HAP-1 (cell line): ENCODE measurements at regions of chr13 and their contacts with region 1.

Region 1: GRCh38 chr13:61954092-61954491 is 538.4 kb upstream of the PCDH20 start:
- DNase-seq: peak in 1 of 2 experiments; percentile 62
- H3K4me3 ChIP-seq: no peak overlapping the region
- H3K4me1 ChIP-seq: no peaks in the 10 kb centered on the region
- H3K27me3 ChIP-seq: peaks cover 3% of the 10 kb centered on the region; the same call in 1 of the 2 replicates

Region 2: DNA sequence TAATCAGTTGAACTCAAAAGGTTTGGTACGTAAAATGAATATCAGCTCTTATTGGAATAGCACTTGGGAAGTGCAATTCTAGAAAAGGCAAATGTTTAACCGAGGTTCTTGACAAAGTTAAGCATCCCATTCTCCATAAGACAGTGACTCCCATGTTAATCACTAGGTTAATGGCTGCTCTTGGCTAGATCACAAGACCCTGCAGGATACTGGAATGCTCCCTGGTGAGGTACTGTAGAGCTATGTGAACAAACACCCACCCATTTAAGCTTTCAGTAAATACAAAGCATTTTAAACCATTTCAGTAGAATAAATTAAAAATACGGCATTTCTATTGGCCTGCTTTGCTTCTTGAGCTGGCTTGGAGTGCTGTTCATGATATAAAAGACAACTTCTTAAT is 1500.6 kb before region 1 on chr13:
- in situ Hi-C with region 1: loop called (anchors 25 kb)
- DNase-seq: no peak
- H3K4me3 ChIP-seq: no peak overlapping the region
- H3K4me1 ChIP-seq: no peaks in the 10 kb centered on the region; the same call in 1 of the 2 replicates
- H3K27me3 ChIP-seq: no peaks in the 10 kb centered on the region

Region 3: DNA sequence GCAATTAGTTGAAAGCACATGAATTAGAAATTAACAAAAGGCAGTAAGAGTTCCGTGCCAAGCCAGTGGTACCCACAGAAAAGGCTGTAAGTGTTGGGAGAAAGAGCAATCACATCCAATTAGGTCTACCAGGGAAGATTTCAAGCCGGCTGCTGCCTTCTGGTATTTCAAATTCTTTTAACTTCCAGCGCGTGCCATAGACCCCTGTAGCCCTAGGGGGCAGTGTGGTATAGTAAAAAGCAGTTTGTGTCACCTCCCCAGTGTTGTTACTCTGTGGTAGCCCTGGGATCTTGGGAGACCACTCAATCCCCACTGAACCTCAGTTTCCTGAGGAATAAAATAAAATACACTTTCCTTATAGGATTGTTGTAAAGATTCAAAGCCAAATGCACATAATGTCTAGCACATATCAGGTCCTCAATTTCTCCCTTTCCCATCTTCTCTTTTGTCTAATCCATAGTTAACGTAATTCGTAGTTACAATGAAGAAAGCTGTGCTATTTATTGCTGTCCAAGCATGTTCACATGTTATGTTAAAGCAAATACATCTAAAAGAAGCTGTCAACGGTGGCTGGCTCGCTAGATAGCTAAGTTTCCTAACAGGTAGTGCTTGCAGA is 1326.9 kb before region 1 on chr13:
- in situ Hi-C with region 1: loop called (anchors 25 kb)
- DNase-seq: peak; percentile 37 to 74
- H3K4me3 ChIP-seq: no peak overlapping the region
- H3K4me1 ChIP-seq: no peaks in the 10 kb centered on the region
- H3K27me3 ChIP-seq: 0 out of 2 replicates have a peak, but pooled peaks cover 3% of the 10 kb centered on the region

Region 4: DNA sequence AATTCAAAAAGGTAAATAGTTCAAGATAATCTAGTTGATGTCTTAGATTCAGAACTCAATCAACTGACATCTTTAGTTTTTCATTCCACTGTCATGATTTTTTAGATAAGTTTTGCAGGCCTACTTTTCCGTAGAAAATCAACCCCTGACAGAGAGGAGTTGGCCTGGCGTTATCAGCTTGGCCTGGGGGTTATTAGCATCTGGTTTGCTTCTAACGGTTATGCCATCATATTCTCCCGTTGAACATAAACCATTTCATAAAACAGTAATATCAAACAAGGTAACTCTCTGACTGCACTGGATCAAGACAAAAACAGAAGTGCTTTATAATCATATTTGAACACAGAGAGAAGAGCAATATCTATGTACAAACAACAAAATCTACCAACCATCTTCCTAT is 407.7 kb before region 1 on chr13:
- in situ Hi-C with region 1: no loop called
- DNase-seq: no peak
- H3K4me3 ChIP-seq: no peak overlapping the region
- H3K4me1 ChIP-seq: no peaks in the 10 kb centered on the region
- H3K27me3 ChIP-seq: no peaks in the 10 kb centered on the region

Region 5: DNA sequence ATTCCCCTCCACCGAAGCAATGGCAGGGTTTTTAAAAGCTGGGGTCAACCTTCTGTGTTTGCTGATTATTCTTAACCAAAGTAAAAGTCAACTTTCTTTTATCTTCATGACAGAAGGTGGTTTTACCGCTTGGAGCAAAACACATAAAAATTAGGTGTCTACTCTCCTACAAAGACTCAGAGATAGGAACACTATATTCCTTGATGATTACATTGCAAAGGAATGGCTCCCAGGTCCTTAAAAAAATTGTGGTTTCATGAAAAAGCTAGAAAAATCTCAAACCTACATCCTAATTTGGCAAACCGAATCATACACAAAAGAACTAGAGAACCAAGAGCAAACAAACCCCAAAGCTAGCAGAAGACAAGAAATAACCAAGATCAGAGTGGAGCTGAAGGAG is 222.0 kb after region 1 on chr13:
- in situ Hi-C with region 1: no loop called
- DNase-seq: no peak
- H3K4me3 ChIP-seq: no peak overlapping the region
- H3K4me1 ChIP-seq: peaks cover 14% of the 10 kb centered on the region; the same call in 1 of the 2 replicates
- H3K27me3 ChIP-seq: no peaks in the 10 kb centered on the region